Sigmoid colon (tissue), 7 donors: ENCODE measurements at regions of chr7 and their contacts with region 1.

Region 1: DNA sequence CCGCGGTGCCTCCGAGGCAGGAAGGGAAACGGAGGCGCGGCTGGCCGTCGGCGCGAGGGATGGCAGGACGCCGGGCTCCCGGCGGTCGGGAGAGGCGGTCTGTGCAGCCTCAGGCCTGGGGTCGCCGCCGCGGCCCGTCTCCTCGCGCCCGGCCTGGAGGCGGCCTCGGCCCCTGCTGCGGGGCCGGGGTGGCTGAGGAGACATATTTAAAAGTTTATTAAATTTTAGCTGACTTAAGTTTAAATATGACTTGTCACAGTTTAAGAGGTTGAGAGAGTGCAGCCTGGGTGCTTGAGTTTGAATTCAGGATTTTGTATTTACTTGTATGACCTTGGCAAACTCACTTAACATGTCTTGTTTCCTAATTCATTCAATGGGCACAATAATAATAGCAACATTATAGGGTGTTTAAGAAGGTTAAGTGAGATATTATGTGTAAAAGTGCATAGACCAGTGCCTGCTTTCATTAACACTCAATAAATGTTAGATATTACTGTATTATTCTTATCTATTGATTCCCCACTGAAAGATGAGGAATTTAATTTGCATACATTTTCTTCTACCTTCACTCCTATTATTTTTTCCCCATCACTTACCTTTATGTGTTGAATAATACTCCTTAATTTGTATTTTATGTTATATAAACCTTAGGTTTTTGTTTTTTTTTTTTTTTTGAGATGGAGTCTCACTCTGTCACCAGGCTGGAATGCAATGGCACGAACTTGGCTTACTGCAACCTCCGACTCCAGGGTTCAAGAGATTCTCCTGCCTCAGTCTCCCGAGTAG is 718 bp downstream of the DYNC2I1 start:
- DNase-seq: no peak
- H3K4me3 ChIP-seq: peak overlapping the region; percentile 69 to 94 (median 78)
- H3K27ac ChIP-seq: peak overlapping the region; percentile 88 to 91 (median 88)
- H3K4me1 ChIP-seq: peaks cover 0 to 23% (median 12%) of the 10 kb centered on the region in 4 donors
- H3K27me3 ChIP-seq: no peaks in the 10 kb centered on the region
- CTCF ChIP-seq: no peak
- EP300 ChIP-seq: no peak
- POLR2A ChIP-seq: no peak

Region 2: DNA sequence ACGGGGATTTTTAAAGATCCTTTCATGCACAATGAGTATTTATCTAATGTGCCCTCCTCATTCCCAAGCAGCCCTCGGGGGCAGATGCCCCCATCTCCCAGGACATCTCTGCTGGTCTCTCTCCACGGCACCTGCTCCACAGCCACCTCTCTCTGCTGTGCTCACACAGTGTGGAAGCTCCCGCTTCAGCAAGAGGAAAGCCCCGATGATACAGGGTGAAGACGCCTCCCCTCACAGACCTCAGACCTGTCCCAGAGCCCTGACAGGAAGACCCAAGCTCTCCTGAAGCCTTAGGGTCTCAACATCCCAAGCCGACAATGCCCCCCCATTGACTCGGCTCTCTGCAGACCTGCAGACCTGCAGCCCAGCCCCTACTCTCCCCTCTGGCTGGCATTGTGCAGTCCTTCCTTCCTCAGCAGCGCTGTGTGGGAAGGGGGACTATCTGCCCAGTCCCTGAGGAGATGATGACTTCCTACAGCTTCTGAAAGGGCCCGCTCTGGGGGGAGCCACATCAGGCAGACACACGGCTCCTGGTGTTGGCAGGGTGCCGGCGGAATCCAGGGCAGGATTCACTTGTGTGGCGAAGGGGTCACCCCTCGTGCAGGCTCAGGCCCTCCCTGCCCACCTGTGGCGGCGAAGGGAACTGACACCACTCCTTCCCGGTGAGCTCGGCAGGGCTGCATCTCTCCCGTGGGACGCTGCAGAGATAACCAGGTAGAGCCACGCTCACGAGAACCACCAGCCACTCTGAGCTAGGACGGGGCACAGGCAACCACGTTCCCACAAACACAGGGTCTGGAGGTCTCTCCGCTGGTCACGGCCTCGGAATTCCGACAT is 331.2 kb before region 1 on chr7:
- intact Hi-C with region 1: no loop called
- DNase-seq: no peak
- H3K4me3 ChIP-seq: no peak overlapping the region
- H3K27ac ChIP-seq: no peak overlapping the region
- H3K4me1 ChIP-seq: no peaks in the 10 kb centered on the region
- H3K27me3 ChIP-seq: no peaks in the 10 kb centered on the region
- CTCF ChIP-seq: no peak
- EP300 ChIP-seq: no peak
- POLR2A ChIP-seq: no peak

Region 3: DNA sequence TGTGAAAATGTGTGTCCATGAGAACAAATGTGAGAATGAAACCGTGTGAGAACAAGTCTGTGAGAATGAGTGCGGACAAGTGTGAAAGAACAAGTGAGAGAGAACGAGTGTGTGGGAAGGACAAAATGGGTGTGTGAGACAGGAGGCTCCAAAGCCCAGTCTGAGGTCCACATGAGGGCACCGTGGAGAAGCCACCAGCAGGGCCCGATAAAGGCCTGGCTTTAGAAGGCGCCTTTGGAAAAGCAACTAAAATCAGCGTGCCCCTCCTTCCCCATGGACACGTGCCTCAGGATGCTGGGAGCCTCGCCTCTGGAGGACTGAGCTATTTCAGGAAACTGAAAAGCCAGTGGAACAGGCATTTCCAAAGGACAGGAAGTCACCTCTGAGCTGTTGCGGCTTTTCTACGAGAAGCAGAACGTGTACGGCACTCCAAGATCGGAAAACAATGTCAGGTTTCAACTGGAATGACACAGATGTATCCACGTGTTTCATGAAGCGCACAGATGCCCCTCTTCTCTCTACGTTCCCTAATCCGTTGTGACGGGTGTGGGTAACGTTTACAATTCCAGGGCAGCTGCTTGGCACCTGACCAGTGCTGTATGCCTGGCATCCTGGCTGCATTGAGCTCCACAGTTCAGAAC is 74.2 kb before region 1 on chr7:
- intact Hi-C with region 1: loop called (anchors 2 kb)
- DNase-seq: peak; percentile 92
- H3K4me3 ChIP-seq: peak overlapping the region in 2 of 4 donors; percentile 20 to 23
- H3K27ac ChIP-seq: peak overlapping the region; percentile 84 to 89 (median 87)
- H3K4me1 ChIP-seq: peaks cover 0 to 70% (median 58%) of the 10 kb centered on the region in 4 donors
- H3K27me3 ChIP-seq: no peaks in the 10 kb centered on the region
- CTCF ChIP-seq: peak; percentile 46 to 67 (median 48)
- EP300 ChIP-seq: peak in 1 of 4 donors; percentile 11
- POLR2A ChIP-seq: no peak